Activated T-helper 2 cell treated with anti-CD3 and anti-CD28 coated beads, Interferon-gamma antibody, Interleukin-2, Interleukin-4, amounts not matched to agents 10 μg/mL and 5 μg/mL and 100 μg/mL, durations not matched to agents 14 hours and 24 hours and 36 hours (primary cell): ENCODE measurements at regions of chr17 and their contacts with region 1.

Region 1: GRCh38 chr17:40516581-40517285 is 15.3 kb upstream of the TNS4 start:
- DNase-seq: peak; percentile 77
- H3K4me3 Mint-ChIP-seq: peak overlapping the region; percentile 74
- H3K27ac Mint-ChIP-seq: peak overlapping the region; percentile 88
- H3K4me1 Mint-ChIP-seq: peaks cover 61% of the 10 kb centered on the region
- H3K27me3 Mint-ChIP-seq: no peaks in the 10 kb centered on the region

Region 2: GRCh38 chr17:40317880-40318829 is 198.6 kb before region 1 on chr17:
- intact Hi-C with region 1: no loop called
- DNase-seq: peak; percentile 87
- H3K4me3 Mint-ChIP-seq: peak overlapping the region; percentile 92
- H3K27ac Mint-ChIP-seq: peak overlapping the region; percentile 81
- H3K4me1 Mint-ChIP-seq: peaks cover 58% of the 10 kb centered on the region
- H3K27me3 Mint-ChIP-seq: no peaks in the 10 kb centered on the region

Region 3: DNA sequence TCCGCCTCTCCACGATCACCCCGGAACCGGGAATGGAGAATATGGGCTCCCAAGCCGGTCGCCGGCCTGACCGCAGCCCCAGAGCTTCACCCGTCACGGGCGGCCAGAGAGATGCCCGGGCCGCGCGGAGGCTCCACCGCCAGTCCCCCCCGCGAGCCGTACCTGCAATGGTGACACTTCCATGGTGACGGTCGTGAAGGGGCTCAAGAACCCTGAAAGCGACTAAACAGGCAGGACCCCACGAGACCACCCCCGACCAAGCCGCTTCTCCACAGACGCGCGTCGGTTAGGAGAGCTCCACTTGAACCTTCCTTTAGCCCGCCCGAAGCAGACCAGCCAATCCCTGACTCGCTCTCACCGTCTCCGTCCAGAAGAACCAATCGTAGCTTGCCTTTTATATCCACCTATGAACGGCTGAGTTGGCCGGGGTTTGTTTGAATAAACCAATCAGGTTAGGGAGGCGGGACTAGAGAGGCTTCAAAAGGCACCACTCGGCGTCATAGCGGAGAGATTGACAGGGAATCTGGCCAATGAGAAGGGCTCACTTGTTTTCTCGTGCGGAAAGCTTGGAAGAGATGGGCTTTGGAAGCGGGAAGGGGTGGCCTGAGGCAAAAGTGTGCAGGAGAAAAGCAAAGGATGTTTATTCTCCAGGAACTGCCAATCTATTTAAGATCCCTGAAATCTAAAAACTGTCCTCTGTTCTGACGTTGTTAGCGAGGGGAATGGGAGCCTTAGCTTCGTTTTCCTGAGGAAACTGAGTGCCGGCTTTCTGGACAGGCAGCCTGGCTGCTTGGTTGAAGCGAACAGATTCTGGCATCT is 98.9 kb before region 1 on chr17 and contains the start of gene TOP2A:
- intact Hi-C with region 1: loop called (anchors 5 kb)
- DNase-seq: peak; percentile 98
- H3K4me3 Mint-ChIP-seq: peak within 1 kb of the TSS; percentile 95
- H3K27ac Mint-ChIP-seq: peak within 1 kb of the TSS; percentile 93
- H3K4me1 Mint-ChIP-seq: peaks cover 25% of the 10 kb centered on the region
- H3K27me3 Mint-ChIP-seq: no peaks in the 10 kb centered on the region
- total RNA-seq, gene TOP2A: 193 and 199 TPM in 2 replicates